HepG2 (cell line): ENCODE measurements at regions of chr21 and their contacts with region 1.

Region 1: DNA sequence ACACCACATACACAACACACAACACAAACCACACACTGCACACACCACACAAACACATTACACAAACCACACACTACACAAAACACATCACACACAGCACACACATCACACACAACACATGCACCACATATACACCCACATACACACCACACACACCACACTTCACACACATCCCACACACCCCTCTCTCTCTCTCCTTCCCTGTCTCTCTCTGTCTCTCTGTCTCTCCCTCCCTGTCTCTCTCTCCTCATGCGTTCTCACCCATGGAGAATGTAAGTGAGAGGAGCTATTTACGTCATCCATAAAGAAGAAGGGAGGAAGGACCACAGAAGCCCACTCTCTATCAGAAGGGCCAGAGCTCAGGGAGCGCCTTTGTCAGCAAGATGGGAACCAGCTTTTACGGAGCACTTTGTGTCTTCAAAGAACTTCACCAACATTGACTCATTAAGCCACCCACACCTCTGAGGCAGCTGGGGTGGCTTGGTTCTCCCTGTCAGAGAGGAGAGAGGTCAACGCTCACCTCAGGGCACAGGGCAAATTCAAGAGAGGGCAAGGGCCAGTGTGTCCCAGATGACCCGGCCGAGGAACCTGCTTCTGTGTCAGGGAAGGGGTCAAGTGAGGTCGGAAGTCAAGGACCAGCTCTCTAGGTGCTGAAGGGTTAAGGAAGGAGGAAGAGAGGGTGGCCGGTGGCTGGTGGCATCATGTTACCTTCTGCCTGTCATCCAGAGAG is 108.7 kb downstream of the ETS2 start:
- DNase-seq: no peak
- ATAC-seq: peak; percentile 8; the same call in 2 of the 3 replicates
- H3K4me3 ChIP-seq: peak overlapping the region in 1 of 3 experiments; percentile 11; a peak in 1 of 6 replicates
- H3K27ac ChIP-seq: peak overlapping the region; percentile 48
- H3K4me1 ChIP-seq: peaks cover 85% of the 10 kb centered on the region
- H3K27me3 ChIP-seq: no peaks in the 10 kb centered on the region; a peak in 1 of 5 replicates
- CTCF ChIP-seq: no peak
- EP300 ChIP-seq: peak in 1 of 2 experiments; percentile 34; a peak in 1 of 4 replicates
- POLR2A ChIP-seq: no peak
- RAD21 ChIP-seq: no peak

Region 2: DNA sequence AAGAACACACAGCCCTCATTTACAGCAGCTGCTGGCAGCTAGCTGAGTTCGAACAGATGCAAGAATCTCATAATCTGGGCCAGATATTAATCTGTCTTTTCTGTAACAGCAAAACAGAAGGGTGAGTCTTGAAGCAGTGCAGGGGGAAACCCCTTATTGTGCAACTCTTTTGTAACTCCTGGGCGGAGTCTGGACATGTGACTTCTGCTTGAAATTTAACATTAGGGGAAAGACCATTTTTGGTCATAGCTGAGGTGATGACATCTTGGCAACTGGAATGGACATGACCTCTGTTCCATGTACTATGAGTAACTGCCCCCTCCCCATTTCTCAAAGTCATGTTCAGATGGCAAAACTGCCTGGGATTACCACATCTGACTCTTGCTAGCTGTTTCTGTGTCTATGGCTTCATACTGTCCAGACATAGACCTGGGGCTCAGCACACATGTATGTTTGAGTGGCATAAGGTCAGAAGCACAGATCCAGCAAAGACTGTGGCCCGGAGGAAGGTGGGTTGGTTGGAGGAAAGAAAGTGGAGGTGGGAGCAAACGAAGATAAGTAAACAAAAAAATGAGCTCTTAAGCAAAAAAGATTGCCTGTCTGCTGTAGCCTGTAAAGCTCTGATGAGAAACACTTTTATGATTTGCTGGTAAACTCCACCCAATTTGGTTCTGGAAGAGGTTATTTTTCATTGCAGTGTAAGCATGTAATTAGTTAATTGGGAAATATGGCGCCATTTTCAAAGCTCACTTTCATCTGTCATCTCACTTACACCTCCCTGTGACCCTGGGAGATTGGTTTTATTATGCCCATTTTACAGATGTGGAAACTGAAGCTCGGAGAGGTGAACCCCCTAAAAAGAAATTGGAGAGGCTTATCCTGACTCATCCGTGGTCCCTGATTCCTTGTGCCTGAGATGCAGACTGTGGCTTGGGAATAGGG is 82.7 kb before region 1 on chr21:
- CTCF ChIA-PET with region 1: no interaction called
- POLR2A ChIA-PET with region 1: interaction called, 9 read pairs
- in situ Hi-C with region 1: no loop called
- intact Hi-C with region 1: loop called (anchors 5 kb)
- DNase-seq: peak; percentile 91
- ATAC-seq: peak; percentile 86
- H3K4me3 ChIP-seq: no peak overlapping the region; a peak in 1 of 6 replicates
- H3K27ac ChIP-seq: peak overlapping the region; percentile 31
- H3K4me1 ChIP-seq: peaks cover 51% of the 10 kb centered on the region
- H3K27me3 ChIP-seq: no peaks in the 10 kb centered on the region
- CTCF ChIP-seq: no peak
- EP300 ChIP-seq: peak; percentile 49 to 69; a peak in 2 of 4 replicates
- POLR2A ChIP-seq: no peak
- RAD21 ChIP-seq: no peak

Region 3: GRCh38 chr21:39105341-39105765 is 190.9 kb after region 1 on chr21:
- CTCF ChIA-PET with region 1: no interaction called
- POLR2A ChIA-PET with region 1: no interaction called
- in situ Hi-C with region 1: no loop called
- intact Hi-C with region 1: no loop called
- DNase-seq: peak; percentile 76
- ATAC-seq: peak; percentile 68
- H3K4me3 ChIP-seq: no peak overlapping the region
- H3K27ac ChIP-seq: peak overlapping the region; percentile 60
- H3K4me1 ChIP-seq: peaks cover 54% of the 10 kb centered on the region
- H3K27me3 ChIP-seq: no peaks in the 10 kb centered on the region
- CTCF ChIP-seq: no peak
- EP300 ChIP-seq: no peak
- POLR2A ChIP-seq: no peak
- RAD21 ChIP-seq: no peak

Region 4: DNA sequence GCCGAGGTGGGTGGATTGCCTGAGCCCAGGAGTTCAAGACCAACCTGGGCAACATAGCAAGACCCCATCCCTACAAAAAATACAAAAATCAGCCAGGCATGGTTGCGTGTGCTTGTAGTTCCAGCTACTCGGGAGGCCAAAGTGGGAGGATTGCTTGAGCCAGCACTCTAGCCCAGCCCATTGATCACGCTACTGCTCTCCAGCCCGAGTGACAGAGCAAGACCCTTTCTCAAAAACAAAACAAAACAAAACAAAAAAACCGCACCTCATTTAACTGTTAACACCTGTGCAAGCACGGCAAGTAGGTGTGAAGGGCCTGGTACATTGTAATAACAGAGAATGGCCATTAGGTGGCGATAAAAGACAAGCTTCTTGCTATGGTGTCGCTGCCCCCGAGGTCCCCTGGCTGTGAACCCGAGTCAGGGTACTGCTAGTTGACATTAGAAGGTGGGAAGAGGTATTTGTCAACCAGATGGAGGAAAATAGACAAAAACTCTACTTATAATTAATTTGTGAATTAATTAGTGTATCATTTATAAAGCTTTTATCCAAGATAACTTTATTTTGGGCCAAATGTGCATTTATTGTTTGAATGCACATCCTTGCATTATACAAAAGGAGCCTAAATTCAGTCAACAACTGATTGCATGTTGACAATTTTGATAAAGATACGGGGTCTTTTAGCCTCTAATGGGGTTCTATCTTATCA is 603.8 kb after region 1 on chr21:
- CTCF ChIA-PET with region 1: no interaction called
- POLR2A ChIA-PET with region 1: no interaction called
- in situ Hi-C with region 1: no loop called
- intact Hi-C with region 1: no loop called
- DNase-seq: peak; percentile 60
- ATAC-seq: peak; percentile 98
- H3K4me3 ChIP-seq: no peak overlapping the region
- H3K27ac ChIP-seq: no peak overlapping the region
- H3K4me1 ChIP-seq: no peaks in the 10 kb centered on the region
- H3K27me3 ChIP-seq: no peaks in the 10 kb centered on the region
- CTCF ChIP-seq: peak; percentile 88
- EP300 ChIP-seq: no peak
- POLR2A ChIP-seq: no peak
- RAD21 ChIP-seq: peak; percentile 81